ENCODE measurements at regions of chrX and their contacts with region 1.

Region 1: DNA sequence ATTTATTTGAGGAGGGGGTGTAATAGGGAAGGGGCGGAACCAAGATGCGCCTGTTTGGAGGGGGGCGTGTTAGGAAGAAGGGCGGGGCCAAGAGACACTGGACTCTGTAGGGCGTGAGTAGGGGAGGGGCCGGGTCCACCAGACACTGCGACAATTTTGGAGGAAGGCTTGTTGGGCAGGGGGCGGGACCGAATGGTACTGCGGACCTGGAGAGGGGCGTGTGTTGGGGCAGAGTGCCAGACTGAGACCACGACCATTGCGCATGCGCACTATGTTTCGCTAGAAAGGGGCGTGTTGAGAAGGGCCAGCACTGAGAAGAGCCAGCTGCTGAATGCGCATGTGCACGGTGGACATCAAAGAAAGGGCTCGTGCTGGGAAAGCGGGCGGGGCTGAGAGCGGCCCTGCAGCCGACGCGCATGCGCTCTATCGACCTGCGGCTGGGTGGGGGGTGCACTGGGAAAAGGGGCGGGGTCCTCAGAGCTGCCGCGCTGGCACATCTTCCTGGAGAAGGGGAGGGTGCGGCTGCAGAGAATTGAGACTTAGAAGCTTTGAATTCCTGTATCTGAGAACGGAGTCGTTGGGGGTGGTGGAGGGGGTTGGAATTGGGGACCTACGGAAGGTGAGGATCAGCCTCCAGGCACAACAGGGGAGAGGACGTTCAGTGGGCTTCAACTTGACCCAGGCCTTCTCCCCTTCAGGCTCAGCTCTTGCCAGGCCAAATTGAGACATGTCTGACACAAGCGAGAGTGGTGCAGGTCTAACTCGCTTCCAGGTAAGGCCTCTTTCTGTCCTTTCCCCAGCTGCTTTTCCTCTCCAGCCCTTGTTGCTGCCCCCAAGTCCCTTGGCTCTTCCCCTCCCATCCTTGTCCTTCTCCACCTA is 1.3 kb downstream of the MAGED2 start:
- DNase-seq: peak; percentile 92
- ATAC-seq: peak; percentile 92
- H3K4me3 ChIP-seq: peak overlapping the region in 4 of 5 experiments; percentile 67 to 81 (median 76)
- H3K4me3 Mint-ChIP-seq: peak overlapping the region; percentile 96
- H3K27ac ChIP-seq: peak overlapping the region; percentile 64 to 82
- H3K27ac Mint-ChIP-seq: peak overlapping the region; percentile 93
- H3K4me1 ChIP-seq: peaks cover 8 to 16% of the 10 kb centered on the region in 2 donors
- H3K4me1 Mint-ChIP-seq: peaks cover 5% of the 10 kb centered on the region
- H3K27me3 ChIP-seq: no peaks in the 10 kb centered on the region
- H3K27me3 Mint-ChIP-seq: no peaks in the 10 kb centered on the region
- CTCF ChIP-seq: no peak

Region 2: GRCh38 chrX:52995135-52996020 is 1813.5 kb before region 1 on chrX:
- CTCF ChIA-PET with region 1: no interaction called
- POLR2A ChIA-PET with region 1: no interaction called
- intact Hi-C with region 1: loop called (anchors 5 kb)
- DNase-seq: peak; percentile 94
- ATAC-seq: peak; percentile 95
- H3K4me3 ChIP-seq: peak overlapping the region; percentile 58 to 87 (median 73)
- H3K4me3 Mint-ChIP-seq: peak overlapping the region; percentile 97
- H3K27ac ChIP-seq: peak overlapping the region; percentile 90 to 91
- H3K27ac Mint-ChIP-seq: peak overlapping the region; percentile 99
- H3K4me1 ChIP-seq: peaks cover 18 to 25% of the 10 kb centered on the region in 2 donors
- H3K4me1 Mint-ChIP-seq: peaks cover 23% of the 10 kb centered on the region
- H3K27me3 ChIP-seq: no peaks in the 10 kb centered on the region
- H3K27me3 Mint-ChIP-seq: no peaks in the 10 kb centered on the region
- CTCF ChIP-seq: peak; percentile 58

Region 3: DNA sequence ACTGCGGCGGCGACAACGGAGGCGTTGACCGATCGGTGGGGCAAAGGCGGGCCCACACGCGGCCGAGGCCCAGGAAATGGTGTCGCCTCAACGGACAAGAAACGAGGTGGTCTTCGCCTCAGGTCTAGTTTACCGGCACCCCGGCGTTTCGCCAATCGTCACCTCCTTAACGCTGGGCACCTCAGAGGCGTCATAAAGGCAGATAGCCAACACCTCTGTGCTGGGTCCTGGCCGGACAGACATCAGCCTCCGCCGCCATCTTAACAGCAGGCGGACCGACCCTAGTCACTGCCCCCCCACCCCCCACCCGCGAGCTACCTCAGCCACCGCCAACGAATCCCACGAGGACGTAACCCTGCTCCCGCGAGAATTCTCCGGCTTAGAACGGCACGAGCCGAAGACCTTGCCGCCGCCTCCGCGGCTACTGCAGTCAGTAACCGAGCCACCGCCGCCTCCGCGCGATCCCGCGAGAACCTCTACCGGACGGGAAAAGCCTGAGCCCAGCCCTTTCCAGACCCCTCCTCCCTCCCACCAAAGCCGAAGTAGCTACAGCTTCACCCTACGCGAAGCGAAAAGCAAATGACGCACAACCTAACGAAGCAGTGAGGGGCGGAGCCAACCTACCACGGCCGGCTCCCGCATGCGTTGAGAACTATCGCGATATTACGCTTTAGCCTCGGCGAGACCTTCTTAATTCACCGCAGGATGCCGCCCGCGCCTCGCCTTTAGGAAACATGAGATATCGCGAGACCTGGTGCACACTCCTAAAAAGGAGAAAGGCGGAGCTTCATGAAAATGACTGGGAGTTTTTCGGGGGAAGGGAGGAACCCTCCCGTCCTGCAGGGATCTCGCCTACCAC is 1125.1 kb before region 1 on chrX:
- CTCF ChIA-PET with region 1: no interaction called
- POLR2A ChIA-PET with region 1: no interaction called
- intact Hi-C with region 1: loop called (anchors 10 kb)
- DNase-seq: peak; percentile 96
- ATAC-seq: peak; percentile 70
- H3K4me3 ChIP-seq: peak overlapping the region; percentile 65 to 77 (median 69)
- H3K4me3 Mint-ChIP-seq: peak overlapping the region; percentile 94
- H3K27ac ChIP-seq: peak overlapping the region; percentile 95 to 98
- H3K27ac Mint-ChIP-seq: peak overlapping the region; percentile 99
- H3K4me1 ChIP-seq: peaks cover 21 to 26% of the 10 kb centered on the region in 2 donors
- H3K4me1 Mint-ChIP-seq: peaks cover 39% of the 10 kb centered on the region
- H3K27me3 ChIP-seq: no peaks in the 10 kb centered on the region
- H3K27me3 Mint-ChIP-seq: no peaks in the 10 kb centered on the region
- CTCF ChIP-seq: no peak

Region 4: GRCh38 chrX:54639346-54640102 is 169.3 kb before region 1 on chrX:
- CTCF ChIA-PET with region 1: interaction called, 10 read pairs
- POLR2A ChIA-PET with region 1: interaction called, 10 read pairs
- intact Hi-C with region 1: loop called (anchors 1 kb)
- DNase-seq: peak; percentile 94
- ATAC-seq: peak; percentile 85
- H3K4me3 ChIP-seq: peak overlapping the region; percentile 61 to 71 (median 66)
- H3K4me3 Mint-ChIP-seq: peak overlapping the region; percentile 96
- H3K27ac ChIP-seq: peak overlapping the region; percentile 98
- H3K27ac Mint-ChIP-seq: peak overlapping the region; percentile 99
- H3K4me1 ChIP-seq: peaks cover 0 to 12% of the 10 kb centered on the region in 2 donors
- H3K4me1 Mint-ChIP-seq: peaks cover 10% of the 10 kb centered on the region
- H3K27me3 ChIP-seq: no peaks in the 10 kb centered on the region
- H3K27me3 Mint-ChIP-seq: no peaks in the 10 kb centered on the region
- CTCF ChIP-seq: peak; percentile 59

Region 5: GRCh38 chrX:54675762-54676161 is 133.1 kb before region 1 on chrX:
- CTCF ChIA-PET with region 1: no interaction called
- POLR2A ChIA-PET with region 1: no interaction called
- intact Hi-C with region 1: no loop called
- DNase-seq: no peak
- ATAC-seq: no peak
- H3K4me3 ChIP-seq: no peak overlapping the region
- H3K4me3 Mint-ChIP-seq: no peak overlapping the region
- H3K27ac ChIP-seq: no peak overlapping the region
- H3K27ac Mint-ChIP-seq: no peak overlapping the region
- H3K4me1 ChIP-seq: no peaks in the 10 kb centered on the region
- H3K4me1 Mint-ChIP-seq: no peaks in the 10 kb centered on the region
- H3K27me3 ChIP-seq: no peaks in the 10 kb centered on the region
- H3K27me3 Mint-ChIP-seq: peaks cover 5% of the 10 kb centered on the region
- CTCF ChIP-seq: no peak

Region 6: GRCh38 chrX:55057675-55058249 is 248.9 kb after region 1 on chrX:
- CTCF ChIA-PET with region 1: no interaction called
- POLR2A ChIA-PET with region 1: no interaction called
- intact Hi-C with region 1: loop called (anchors 10 kb)
- DNase-seq: peak; percentile 53
- ATAC-seq: peak; percentile 71
- H3K4me3 ChIP-seq: peak overlapping the region in 3 of 5 experiments; percentile 18 to 24 (median 18)
- H3K4me3 Mint-ChIP-seq: peak overlapping the region; percentile 78
- H3K27ac ChIP-seq: no peak overlapping the region
- H3K27ac Mint-ChIP-seq: no peak overlapping the region
- H3K4me1 ChIP-seq: peaks cover 6 to 7% of the 10 kb centered on the region in 2 donors
- H3K4me1 Mint-ChIP-seq: peaks cover 10% of the 10 kb centered on the region
- H3K27me3 ChIP-seq: no peaks in the 10 kb centered on the region
- H3K27me3 Mint-ChIP-seq: no peaks in the 10 kb centered on the region
- CTCF ChIP-seq: peak; percentile 77